Cardiac septum (tissue), 1 donor: ENCODE measurements at regions of chr2 and their contacts with region 1.

Region 1: GRCh38 chr2:28566521-28567041 is 70.7 kb downstream of the PLB1 start:
- DNase-seq: peak; percentile 95

Region 2: DNA sequence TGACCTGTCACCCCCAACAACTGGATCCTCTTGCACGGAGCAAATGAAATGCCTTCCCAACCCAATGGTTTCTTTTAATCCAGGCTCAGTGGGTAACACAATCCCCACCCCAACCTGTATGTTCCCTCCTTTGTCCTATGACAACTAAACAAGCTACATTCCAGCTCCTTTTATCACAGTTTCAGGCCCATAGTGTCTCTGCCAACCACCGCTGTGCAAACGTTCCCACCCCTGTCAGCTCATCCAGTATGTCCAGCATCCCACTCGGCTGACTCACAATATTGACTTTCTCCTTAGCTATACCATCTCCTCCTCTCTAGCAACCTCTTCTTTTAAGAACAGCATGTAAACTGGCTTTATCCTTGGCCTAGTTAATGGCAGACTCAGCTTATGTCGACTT is 67.2 kb after region 1 on chr2:
- intact Hi-C with region 1: loop called (anchors 2 kb)
- DNase-seq: peak; percentile 33

Region 3: DNA sequence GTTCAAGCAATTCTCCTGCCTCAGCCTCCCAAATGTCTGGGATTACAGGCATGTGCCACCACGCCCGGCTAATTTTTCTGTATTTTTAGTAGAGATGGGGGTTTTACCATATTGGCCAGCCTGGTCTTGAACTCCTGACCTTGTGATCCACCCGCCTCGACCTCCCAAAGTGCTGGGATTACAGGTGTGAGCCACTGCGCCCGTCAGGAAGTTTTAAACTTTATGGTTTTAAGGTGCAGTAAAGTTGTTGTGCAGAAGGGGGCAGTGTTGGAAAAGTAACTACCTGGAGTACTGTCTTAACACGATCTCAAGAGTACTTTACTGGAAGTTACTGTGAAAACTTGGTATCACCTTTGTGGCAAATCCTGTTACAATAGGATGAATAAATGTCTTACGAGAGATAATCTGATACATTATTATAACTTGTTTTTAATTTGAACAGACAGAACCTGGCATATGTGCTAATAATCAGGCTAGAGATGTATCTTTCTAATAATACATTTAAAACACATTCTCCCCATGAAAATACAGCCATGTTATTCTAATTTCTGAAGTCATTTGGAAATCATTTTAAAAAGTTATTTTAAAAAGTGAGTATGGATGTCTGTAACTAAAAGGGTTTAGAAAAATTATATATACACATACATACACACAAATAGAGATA is 254.8 kb after region 1 on chr2:
- intact Hi-C with region 1: loop called (anchors 5 kb)
- DNase-seq: no peak

Region 4: GRCh38 chr2:28894470-28895177 is 328.0 kb after region 1 on chr2 and contains the start of gene WDR43:
- intact Hi-C with region 1: loop called (anchors 10 kb)
- DNase-seq: peak; percentile 99
- total RNA-seq, gene WDR43: 25.9 TPM

Region 5: GRCh38 chr2:29196792-29197788 is 630.5 kb after region 1 on chr2:
- intact Hi-C with region 1: loop called (anchors 10 kb)
- DNase-seq: no peak